ENCODE measurements at regions of chr1 and their contacts with region 1.

Region 1: DNA sequence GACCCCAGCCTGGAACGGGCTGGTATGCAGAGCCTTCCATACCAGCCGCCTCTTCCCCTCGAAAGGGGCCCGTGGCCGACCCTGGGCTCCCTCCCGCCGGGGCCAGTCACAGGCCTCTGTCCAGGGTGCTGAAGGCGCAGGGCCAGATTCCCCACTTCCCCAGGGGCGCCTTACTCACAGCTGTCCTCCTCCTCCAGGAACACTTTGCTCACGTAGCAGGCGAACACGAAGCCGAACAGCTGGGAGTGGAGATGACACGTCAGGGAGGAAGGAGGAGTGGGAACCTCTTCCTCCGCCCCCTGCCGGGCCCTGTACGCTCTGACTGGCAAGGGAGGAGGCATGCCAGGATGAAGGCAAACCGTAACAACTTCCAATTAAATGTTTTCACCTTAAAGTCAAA is 57.3 kb downstream of the NKAIN1 start:
- DNase-seq: no peak
- ATAC-seq: peak; percentile 80
- H3K4me3 ChIP-seq: peak overlapping the region; percentile 33 to 49
- H3K27ac ChIP-seq: no peak overlapping the region
- H3K4me1 ChIP-seq: 0 out of 2 replicates have a peak, but pooled peaks cover 4% of the 10 kb centered on the region
- H3K27me3 ChIP-seq: 0 out of 2 replicates have a peak, but pooled peaks cover 2% of the 10 kb centered on the region
- CTCF ChIP-seq: no peak

Region 2: GRCh38 chr1:31145648-31146047 is 36.7 kb before region 1 on chr1:
- CTCF ChIA-PET with region 1: no interaction called
- POLR2A ChIA-PET with region 1: no interaction called
- in situ Hi-C with region 1: no loop called
- intact Hi-C with region 1: no loop called
- DNase-seq: no peak
- ATAC-seq: no peak
- H3K4me3 ChIP-seq: no peak overlapping the region
- H3K27ac ChIP-seq: no peak overlapping the region
- H3K4me1 ChIP-seq: no peaks in the 10 kb centered on the region
- H3K27me3 ChIP-seq: no peaks in the 10 kb centered on the region
- CTCF ChIP-seq: no peak

Region 3: DNA sequence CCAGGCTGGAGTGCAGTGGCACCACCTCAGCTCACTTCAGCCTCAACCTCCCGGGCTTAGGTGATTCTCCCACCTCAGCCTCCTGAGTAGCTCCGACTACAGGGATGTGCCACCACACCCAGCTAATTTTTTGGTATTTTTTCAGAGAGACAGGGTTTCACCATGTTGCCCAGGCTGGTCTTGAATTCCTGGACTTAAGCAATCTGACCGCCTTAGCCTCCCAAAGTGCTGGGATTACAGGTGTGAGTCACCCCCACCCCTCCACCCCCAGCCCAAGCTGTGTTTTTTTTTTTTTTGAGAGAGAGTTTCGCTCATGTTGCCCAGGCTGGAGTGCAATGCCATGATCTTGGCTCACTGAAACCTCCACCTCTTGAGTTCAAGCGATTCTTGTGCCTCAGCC is 18.1 kb before region 1 on chr1:
- CTCF ChIA-PET with region 1: interaction called, 12 read pairs
- POLR2A ChIA-PET with region 1: interaction called, 3 read pairs
- in situ Hi-C with region 1: no loop called
- intact Hi-C with region 1: no loop called
- DNase-seq: no peak
- ATAC-seq: no peak
- H3K4me3 ChIP-seq: no peak overlapping the region
- H3K27ac ChIP-seq: no peak overlapping the region
- H3K4me1 ChIP-seq: no peaks in the 10 kb centered on the region
- H3K27me3 ChIP-seq: no peaks in the 10 kb centered on the region
- CTCF ChIP-seq: no peak

Region 4: DNA sequence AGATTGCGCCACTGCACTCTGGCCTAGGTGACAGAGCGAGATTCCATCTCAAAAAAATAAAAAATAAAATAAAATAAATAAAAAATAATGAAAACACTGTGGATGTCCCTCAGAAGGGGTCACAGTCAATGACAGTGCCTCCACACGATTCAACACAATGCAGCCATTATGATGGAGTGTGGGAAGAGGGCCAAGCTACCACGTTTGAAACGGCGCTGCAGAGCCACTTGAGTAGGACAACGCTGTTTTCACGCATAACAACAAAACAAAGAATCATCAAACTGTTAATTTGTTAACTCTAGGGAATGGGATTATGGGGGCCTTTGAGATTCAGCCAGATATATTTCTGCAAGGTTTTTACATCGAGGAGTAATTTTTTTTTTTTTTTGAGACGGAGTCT is 20.9 kb after region 1 on chr1:
- CTCF ChIA-PET with region 1: interaction called, 12 read pairs
- POLR2A ChIA-PET with region 1: no interaction called
- in situ Hi-C with region 1: no loop called
- intact Hi-C with region 1: no loop called
- DNase-seq: no peak
- ATAC-seq: no peak
- H3K4me3 ChIP-seq: no peak overlapping the region
- H3K27ac ChIP-seq: no peak overlapping the region
- H3K4me1 ChIP-seq: no peaks in the 10 kb centered on the region
- H3K27me3 ChIP-seq: no peaks in the 10 kb centered on the region
- CTCF ChIP-seq: no peak

Region 5: DNA sequence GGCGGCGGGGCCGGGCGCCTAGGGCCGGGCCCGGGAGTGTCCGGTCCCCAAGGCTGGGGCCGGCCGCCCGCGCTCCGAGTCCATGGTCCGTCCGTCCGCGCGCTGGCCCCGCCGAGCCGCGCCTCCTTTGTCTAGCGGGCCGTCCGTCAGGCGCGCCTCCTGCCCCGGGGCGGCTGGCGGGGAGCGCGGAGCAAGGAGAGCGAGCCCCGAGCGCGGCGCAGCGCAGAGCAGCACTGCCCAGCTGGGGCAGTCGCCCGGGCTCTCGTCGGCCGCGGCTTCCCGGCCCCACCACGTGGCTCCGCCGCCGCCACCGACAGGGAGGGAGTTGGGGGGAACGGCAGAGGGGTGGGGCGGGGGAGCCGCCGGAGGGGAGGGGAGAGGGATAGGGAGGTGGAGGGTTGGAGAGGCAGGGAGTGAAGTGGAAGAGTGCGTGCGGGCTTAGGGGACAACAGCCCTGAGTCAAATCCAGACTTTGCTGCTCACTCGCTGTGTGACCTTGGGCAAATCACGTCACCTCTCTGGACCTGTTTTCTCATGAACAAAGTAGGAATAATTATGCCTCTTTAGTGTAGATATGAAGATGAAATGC is 57.4 kb after region 1 on chr1 and contains the start of gene NKAIN1:
- CTCF ChIA-PET with region 1: no interaction called
- POLR2A ChIA-PET with region 1: interaction called, 6 read pairs
- in situ Hi-C with region 1: no loop called
- intact Hi-C with region 1: loop called (anchors 10 kb)
- DNase-seq: no peak
- ATAC-seq: peak; percentile 79
- H3K4me3 ChIP-seq: peak within 1 kb of the TSS; percentile 33 to 41
- H3K27ac ChIP-seq: no peak within 1 kb of the TSS
- H3K4me1 ChIP-seq: no peaks in the 10 kb centered on the region
- H3K27me3 ChIP-seq: peaks cover 14% of the 10 kb centered on the region
- CTCF ChIP-seq: no peak
- total RNA-seq, gene NKAIN1: 1.7 TPM

Region 6: DNA sequence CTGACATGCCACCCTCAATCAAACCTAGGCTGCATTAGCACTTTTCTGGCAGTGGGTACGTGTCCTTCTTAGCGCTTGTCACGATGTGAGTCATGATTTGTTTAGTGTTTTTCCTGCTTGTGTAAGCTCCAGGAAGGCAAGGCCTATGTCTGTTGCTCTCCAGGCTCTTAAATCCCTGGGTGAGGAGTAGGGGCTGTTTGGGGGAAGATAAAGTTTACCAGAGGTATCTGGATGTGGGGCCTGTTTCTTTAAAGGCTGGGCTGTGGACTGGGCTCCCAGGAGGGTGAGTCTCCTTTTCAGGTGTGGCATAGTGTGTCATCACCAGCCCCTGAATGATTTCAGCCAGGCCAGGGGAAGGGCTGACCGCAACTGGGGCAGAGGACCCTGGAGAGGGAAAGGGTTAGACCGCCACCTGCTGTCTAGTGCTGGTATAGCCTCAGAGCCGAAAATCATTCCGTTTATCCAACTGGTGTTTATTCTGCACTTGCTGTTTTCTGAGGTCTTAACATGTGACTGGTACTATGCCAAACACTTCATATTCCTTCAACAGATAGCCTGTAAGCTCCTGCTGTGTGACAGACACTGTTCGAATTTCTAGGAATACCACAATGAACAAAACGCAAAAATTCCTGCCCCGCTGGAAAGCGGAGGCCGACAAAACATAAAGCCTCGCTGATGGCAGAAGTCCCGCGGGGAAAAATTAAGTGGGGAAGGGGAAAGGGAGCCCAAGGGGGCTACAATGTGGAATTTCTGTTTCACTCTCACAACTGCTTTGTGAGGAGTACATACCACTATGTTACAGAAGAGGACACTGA is 240.4 kb after region 1 on chr1:
- CTCF ChIA-PET with region 1: interaction called, 4 read pairs
- POLR2A ChIA-PET with region 1: no interaction called
- in situ Hi-C with region 1: no loop called
- intact Hi-C with region 1: loop called (anchors 5 kb)
- DNase-seq: peak; percentile 91
- ATAC-seq: peak; percentile 87
- H3K4me3 ChIP-seq: no peak overlapping the region
- H3K27ac ChIP-seq: peak overlapping the region; percentile 32; the same call in 1 of the 2 replicates
- H3K4me1 ChIP-seq: peaks cover 9% of the 10 kb centered on the region
- H3K27me3 ChIP-seq: no peaks in the 10 kb centered on the region
- CTCF ChIP-seq: peak; percentile 97

Measured in Panc1 (cell line).